Panc1 (cell line): ENCODE measurements at regions of chr7 and their contacts with region 1.

Region 1: DNA sequence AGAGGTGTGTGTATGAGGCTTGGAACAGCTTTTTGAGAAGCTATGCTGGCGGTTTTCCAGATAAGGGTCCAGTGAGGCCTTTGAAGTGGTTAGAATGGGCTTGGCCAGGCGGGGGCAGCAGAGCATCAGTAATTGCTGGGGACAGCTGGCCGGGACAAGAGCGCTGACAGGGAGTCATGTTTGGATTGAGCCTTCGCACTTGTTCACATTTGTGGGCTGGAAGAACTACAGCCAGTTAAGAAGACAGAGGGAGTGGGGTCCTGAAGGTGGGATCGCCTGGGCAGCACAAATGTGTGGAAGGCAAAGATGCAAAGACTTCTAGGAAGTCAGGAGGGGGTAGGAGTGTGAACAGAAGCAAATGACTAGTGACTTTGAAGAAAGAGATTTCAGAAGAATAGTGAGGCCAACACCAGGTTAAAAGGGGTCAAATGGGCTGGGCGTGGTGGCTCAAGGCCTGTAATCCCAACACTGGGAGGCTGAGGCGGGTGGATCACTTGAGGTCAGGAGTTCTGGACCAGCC is 12.7 kb upstream of the SDHAF3 start:
- DNase-seq: peak; percentile 51
- ATAC-seq: peak; percentile 98
- H3K4me3 ChIP-seq: no peak overlapping the region
- H3K27ac ChIP-seq: no peak overlapping the region
- H3K4me1 ChIP-seq: peaks cover 3% of the 10 kb centered on the region; the same call in 1 of the 2 replicates
- H3K27me3 ChIP-seq: peaks cover 2% of the 10 kb centered on the region; the same call in 1 of the 2 replicates
- CTCF ChIP-seq: peak; percentile 84

Region 2: GRCh38 chr7:95718556-95719410 is 1386.0 kb before region 1 on chr7:
- CTCF ChIA-PET with region 1: no interaction called
- POLR2A ChIA-PET with region 1: no interaction called
- in situ Hi-C with region 1: no loop called
- intact Hi-C with region 1: no loop called
- DNase-seq: peak; percentile 13
- ATAC-seq: peak; percentile 58; the same call in 1 of the 2 replicates
- H3K4me3 ChIP-seq: no peak overlapping the region
- H3K27ac ChIP-seq: no peak overlapping the region
- H3K4me1 ChIP-seq: no peaks in the 10 kb centered on the region
- H3K27me3 ChIP-seq: peaks cover 2% of the 10 kb centered on the region; the same call in 1 of the 2 replicates
- CTCF ChIP-seq: peak; percentile 37; the same call in 1 of the 2 replicates

Region 3: DNA sequence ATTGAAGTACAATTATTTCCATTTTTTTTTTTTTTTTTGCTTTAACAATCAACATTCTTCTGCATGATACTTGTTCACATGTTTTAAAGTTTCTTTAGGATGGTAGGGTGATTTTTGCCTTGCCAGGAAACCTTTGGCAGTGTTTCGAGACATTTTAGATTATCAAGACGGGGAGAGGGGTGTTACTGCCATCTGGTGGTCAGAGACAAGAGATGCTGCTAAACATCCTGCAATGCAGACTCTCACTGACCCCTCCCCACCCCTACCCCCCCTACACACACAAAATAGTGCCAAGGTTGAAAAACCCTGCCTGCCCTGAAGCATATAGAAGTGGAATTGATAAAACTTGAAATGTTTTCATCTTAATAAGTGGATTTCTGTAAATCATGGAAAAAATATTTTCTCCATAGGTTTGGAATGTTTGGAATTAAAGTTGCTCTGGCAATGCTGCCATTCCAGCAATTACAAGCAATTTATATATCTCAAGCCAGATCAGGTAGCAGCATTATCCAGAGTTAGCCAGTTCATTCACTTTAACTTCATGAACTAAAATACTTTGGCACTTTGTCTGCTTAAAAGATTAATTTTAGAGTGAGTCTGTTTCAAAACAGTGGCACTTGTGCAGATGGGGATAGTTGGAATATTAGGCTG is 74.8 kb after region 1 on chr7:
- CTCF ChIA-PET with region 1: no interaction called
- POLR2A ChIA-PET with region 1: no interaction called
- in situ Hi-C with region 1: no loop called
- intact Hi-C with region 1: loop called (anchors 1 kb)
- DNase-seq: peak; percentile 43
- ATAC-seq: peak; percentile 71; the same call in 1 of the 2 replicates
- H3K4me3 ChIP-seq: no peak overlapping the region
- H3K27ac ChIP-seq: no peak overlapping the region
- H3K4me1 ChIP-seq: no peaks in the 10 kb centered on the region
- H3K27me3 ChIP-seq: no peaks in the 10 kb centered on the region
- CTCF ChIP-seq: peak; percentile 87

Region 4: GRCh38 chr7:97499204-97499603 is 394.4 kb after region 1 on chr7:
- CTCF ChIA-PET with region 1: no interaction called
- POLR2A ChIA-PET with region 1: no interaction called
- in situ Hi-C with region 1: no loop called
- intact Hi-C with region 1: loop called (anchors 10 kb)
- DNase-seq: peak; percentile 30
- ATAC-seq: peak; percentile 82
- H3K4me3 ChIP-seq: no peak overlapping the region
- H3K27ac ChIP-seq: no peak overlapping the region
- H3K4me1 ChIP-seq: no peaks in the 10 kb centered on the region
- H3K27me3 ChIP-seq: no peaks in the 10 kb centered on the region; the same call in 1 of the 2 replicates
- CTCF ChIP-seq: peak; percentile 73

Region 5: GRCh38 chr7:97693586-97693985 is 588.8 kb after region 1 on chr7:
- CTCF ChIA-PET with region 1: no interaction called
- POLR2A ChIA-PET with region 1: no interaction called
- in situ Hi-C with region 1: no loop called
- intact Hi-C with region 1: no loop called
- DNase-seq: no peak
- ATAC-seq: no peak
- H3K4me3 ChIP-seq: no peak overlapping the region
- H3K27ac ChIP-seq: no peak overlapping the region
- H3K4me1 ChIP-seq: no peaks in the 10 kb centered on the region
- H3K27me3 ChIP-seq: no peaks in the 10 kb centered on the region
- CTCF ChIP-seq: no peak

Region 6: GRCh38 chr7:97835296-97836138 is 730.7 kb after region 1 on chr7:
- CTCF ChIA-PET with region 1: interaction called, 5 read pairs
- POLR2A ChIA-PET with region 1: no interaction called
- in situ Hi-C with region 1: no loop called
- intact Hi-C with region 1: loop called (anchors 2 kb)
- DNase-seq: peak; percentile 60
- ATAC-seq: peak; percentile 91
- H3K4me3 ChIP-seq: no peak overlapping the region
- H3K27ac ChIP-seq: no peak overlapping the region
- H3K4me1 ChIP-seq: no peaks in the 10 kb centered on the region
- H3K27me3 ChIP-seq: peaks cover 16% of the 10 kb centered on the region; the same call in 1 of the 2 replicates
- CTCF ChIP-seq: peak; percentile 78

Region 7: DNA sequence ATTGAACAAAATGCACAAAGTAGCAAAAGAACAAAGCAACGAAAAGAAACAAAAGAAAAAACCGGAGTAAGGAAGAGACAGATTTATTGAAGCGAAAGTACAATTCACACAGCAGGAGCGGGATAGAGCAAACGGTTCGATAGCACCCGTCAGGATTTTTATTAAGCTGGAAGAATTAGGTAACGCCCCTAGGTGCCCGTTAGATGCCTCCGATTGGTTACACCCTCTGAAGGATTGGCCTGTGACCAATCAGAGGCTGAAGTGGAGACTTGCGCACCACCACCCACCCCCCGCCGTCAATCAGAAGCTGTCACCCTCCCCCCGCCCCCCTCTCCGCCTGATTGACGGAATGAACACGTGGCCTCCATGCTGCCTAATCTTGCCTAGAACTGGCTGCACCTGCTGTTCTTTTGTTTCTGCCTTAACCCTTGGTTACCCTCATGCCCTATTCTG is 868.5 kb after region 1 on chr7:
- CTCF ChIA-PET with region 1: no interaction called
- POLR2A ChIA-PET with region 1: interaction called, 10 read pairs
- in situ Hi-C with region 1: no loop called
- intact Hi-C with region 1: no loop called
- DNase-seq: peak; percentile 24
- ATAC-seq: peak; percentile 64
- H3K4me3 ChIP-seq: peak overlapping the region; percentile 81 to 83
- H3K27ac ChIP-seq: peak overlapping the region; percentile 84
- H3K4me1 ChIP-seq: no peaks in the 10 kb centered on the region
- H3K27me3 ChIP-seq: no peaks in the 10 kb centered on the region
- CTCF ChIP-seq: no peak